GM12878 (cell line): ENCODE measurements at regions of chr1 and their contacts with region 1.

Region 1: DNA sequence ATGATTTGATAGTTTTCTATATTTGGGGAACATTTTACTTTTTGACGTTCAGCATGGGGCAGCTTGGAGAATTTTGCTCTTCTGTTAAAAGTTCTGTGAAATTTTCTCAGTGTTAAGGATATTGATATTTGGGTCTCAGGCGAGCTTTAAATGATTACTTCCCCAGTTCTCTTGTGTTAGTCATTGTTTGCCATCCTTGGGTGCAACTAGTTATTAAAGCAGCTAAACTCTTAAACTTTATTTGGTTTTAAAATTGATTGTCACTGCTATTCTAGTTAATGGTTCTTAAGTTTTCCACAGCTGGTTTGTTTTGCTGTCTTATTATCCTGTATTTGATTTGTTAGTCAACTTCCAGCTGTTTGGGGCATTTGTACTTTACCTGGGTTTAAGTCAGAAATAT is 9.0 kb downstream of the COG2 start:
- DNase-seq: no peak
- ATAC-seq: no peak
- H3K4me3 ChIP-seq: no peak overlapping the region
- H3K27ac ChIP-seq: no peak overlapping the region
- H3K4me1 ChIP-seq: no peaks in the 10 kb centered on the region
- H3K27me3 ChIP-seq: no peaks in the 10 kb centered on the region
- CTCF ChIP-seq: no peak
- EP300 ChIP-seq: no peak
- POLR2A ChIP-seq: no peak
- RAD21 ChIP-seq: no peak

Region 2: DNA sequence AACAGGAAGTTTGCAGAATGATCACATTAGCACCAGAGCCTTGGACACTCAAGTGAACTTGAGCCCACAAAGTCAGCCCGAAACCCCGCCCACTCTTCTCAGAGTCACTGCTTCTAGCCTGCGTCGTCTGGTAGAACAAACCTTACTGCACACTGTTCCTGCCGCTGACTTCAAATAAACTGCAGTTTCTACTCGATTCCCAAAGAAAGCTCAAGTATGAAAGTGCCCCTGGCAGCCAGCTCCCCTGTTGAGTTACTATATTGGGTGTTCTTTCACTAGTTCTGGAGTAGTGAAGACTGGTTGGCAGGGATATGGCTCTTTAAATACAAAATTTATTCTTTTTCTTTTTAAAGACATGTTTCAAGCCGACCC is 419.5 kb before region 1 on chr1:
- CTCF ChIA-PET with region 1: no interaction called
- POLR2A ChIA-PET with region 1: interaction called, 12 read pairs
- RAD21 ChIA-PET with region 1: no interaction called
- SMC1A ChIA-PET with region 1: no interaction called
- in situ Hi-C with region 1: no loop called
- intact Hi-C with region 1: no loop called
- DNase-seq: no peak
- ATAC-seq: no peak
- H3K4me3 ChIP-seq: no peak overlapping the region
- H3K27ac ChIP-seq: no peak overlapping the region
- H3K4me1 ChIP-seq: no peaks in the 10 kb centered on the region; the same call in 1 of the 2 replicates
- H3K27me3 ChIP-seq: no peaks in the 10 kb centered on the region
- CTCF ChIP-seq: no peak
- EP300 ChIP-seq: no peak
- POLR2A ChIP-seq: no peak
- RAD21 ChIP-seq: no peak

Region 3: DNA sequence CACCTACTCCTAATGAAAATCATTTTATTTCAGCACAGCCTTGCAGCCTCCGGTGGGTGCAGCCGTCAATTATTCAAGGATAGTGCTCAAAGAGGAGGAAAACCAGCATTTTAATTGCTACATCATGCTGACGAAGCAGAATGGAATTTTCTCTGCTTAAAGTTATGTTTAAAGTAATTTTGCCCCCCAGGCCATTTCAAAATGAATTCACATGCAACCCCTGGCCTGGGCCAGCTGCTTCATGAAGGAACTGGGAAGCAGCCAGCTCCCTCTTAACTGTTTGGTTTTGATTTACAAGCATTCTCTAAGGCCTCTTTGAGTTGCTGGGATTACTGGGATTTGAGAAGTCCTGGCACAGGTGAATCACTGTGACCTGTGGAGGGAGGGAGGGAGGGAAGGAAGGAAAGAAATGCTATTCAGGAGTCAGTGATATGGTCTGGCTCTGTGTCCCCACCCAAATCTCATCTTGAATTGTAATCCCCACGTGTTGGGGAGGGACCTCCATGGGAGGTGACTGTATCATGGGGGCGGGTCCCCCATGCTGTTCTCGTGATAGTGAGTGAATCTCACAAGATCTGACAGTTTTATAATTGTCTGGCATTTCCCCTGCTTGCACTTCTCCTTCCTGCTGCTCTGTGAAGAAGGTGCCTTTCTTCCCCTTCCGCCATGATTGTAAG is 291.1 kb before region 1 on chr1:
- CTCF ChIA-PET with region 1: no interaction called
- POLR2A ChIA-PET with region 1: no interaction called
- RAD21 ChIA-PET with region 1: no interaction called
- SMC1A ChIA-PET with region 1: no interaction called
- in situ Hi-C with region 1: no loop called
- intact Hi-C with region 1: no loop called
- DNase-seq: no peak
- ATAC-seq: no peak
- H3K4me3 ChIP-seq: no peak overlapping the region
- H3K27ac ChIP-seq: no peak overlapping the region
- H3K4me1 ChIP-seq: no peaks in the 10 kb centered on the region
- H3K27me3 ChIP-seq: no peaks in the 10 kb centered on the region; a peak in 1 of 4 replicates
- CTCF ChIP-seq: no peak
- EP300 ChIP-seq: no peak
- POLR2A ChIP-seq: no peak
- RAD21 ChIP-seq: no peak